Activated T-helper 2 cell treated with anti-CD3 and anti-CD28 coated beads, Interferon-gamma antibody, Interleukin-2, Interleukin-4, amounts not matched to agents 10 μg/mL and 5 μg/mL and 100 μg/mL, durations not matched to agents 14 hours and 24 hours and 36 hours (primary cell): ENCODE measurements at regions of chr21 and their contacts with region 1.

Region 1: GRCh38 chr21:42530167-42530518 is 16.5 kb downstream of the SLC37A1 start:
- DNase-seq: no peak
- H3K4me3 Mint-ChIP-seq: no peak overlapping the region
- H3K27ac Mint-ChIP-seq: no peak overlapping the region
- H3K4me1 Mint-ChIP-seq: peaks cover 35% of the 10 kb centered on the region
- H3K27me3 Mint-ChIP-seq: no peaks in the 10 kb centered on the region

Region 2: GRCh38 chr21:42266971-42267556 is 263.1 kb before region 1 on chr21:
- intact Hi-C with region 1: no loop called
- DNase-seq: no peak
- H3K4me3 Mint-ChIP-seq: no peak overlapping the region
- H3K27ac Mint-ChIP-seq: no peak overlapping the region
- H3K4me1 Mint-ChIP-seq: peaks cover 14% of the 10 kb centered on the region
- H3K27me3 Mint-ChIP-seq: no peaks in the 10 kb centered on the region

Region 3: GRCh38 chr21:42474043-42474831 is 55.9 kb before region 1 on chr21:
- intact Hi-C with region 1: loop called (anchors 2 kb)
- DNase-seq: no peak
- H3K4me3 Mint-ChIP-seq: no peak overlapping the region
- H3K27ac Mint-ChIP-seq: no peak overlapping the region
- H3K4me1 Mint-ChIP-seq: no peaks in the 10 kb centered on the region
- H3K27me3 Mint-ChIP-seq: no peaks in the 10 kb centered on the region